GM18951 (cell line): ENCODE measurements at regions of chr1 and their contacts with region 1.

Region 1: GRCh38 chr1:113835642-113836307 is 23.5 kb upstream of the RSBN1 start:
- POLR2A ChIP-seq: no peak

Region 2: DNA sequence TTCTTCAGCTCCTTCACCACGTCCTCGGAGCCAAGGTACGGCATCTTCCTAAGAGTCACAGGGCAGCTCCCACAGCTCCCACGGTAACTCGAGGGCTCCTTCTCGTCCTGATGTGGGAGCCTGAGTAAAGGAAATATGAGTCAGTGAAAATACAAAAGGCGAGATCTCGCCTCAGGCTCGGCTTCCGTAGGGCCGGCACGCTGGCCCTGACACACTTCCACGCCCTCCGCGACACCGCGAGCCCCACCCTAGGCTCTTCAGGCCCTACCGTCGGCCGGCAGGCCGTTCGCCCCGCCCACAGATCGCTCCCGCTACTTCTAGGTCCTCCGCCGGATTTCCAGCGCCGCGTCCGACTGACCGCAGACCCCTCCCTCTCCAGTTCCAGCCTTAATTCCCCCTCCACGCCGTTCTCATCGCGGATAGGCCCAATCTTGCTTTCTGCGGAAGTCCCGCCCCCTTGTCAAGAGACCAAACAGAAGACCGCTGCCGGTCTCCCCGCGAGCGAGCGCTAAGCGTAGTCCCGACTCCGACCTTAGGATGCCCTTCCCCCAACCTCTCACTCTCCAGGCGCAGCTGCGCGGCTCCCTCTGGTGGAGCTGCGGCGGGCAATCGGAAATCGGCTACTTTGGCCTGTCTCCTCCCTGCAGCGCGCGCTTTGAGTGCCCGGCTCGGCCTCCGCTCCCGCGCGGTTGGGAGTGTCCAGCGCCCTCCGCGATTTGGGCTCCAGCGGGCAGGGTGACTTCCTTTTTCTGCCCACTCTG is 69.1 kb after region 1 on chr1 and contains the starts of genes AP4B1 and DCLRE1B:
- in situ Hi-C with region 1: loop called (anchors 10 kb)
- POLR2A ChIP-seq: peak; percentile 80

Region 3: DNA sequence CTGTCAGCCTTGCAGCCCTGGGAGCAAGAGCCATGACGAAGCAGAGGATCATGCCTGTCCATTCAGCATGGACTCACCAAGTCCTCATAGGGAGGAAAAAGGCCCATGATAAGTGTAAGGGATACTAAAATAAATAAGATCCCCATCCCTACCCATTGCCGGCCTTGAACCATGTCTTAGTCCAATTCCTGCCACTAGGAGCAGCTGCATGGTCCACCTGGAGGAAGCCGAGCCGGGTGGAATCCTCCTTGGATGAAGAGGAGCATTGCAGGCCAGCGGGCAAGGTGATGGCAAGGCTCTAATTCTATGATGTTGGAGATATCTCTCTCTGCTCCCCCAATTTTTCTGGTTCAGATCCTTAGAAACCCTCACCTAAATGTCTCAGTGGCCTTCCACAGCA is 356.6 kb after region 1 on chr1:
- in situ Hi-C with region 1: no loop called
- POLR2A ChIP-seq: no peak